PC-9 (cell line): ENCODE measurements at regions of chrX and their contacts with region 1.

Region 1: GRCh38 chrX:74382613-74383012 is 38.7 kb upstream of the SLC16A2 start:
- DNase-seq: peak; percentile 40 to 58
- H3K4me3 ChIP-seq: no peak overlapping the region
- H3K27ac ChIP-seq: no peak overlapping the region
- H3K4me1 ChIP-seq: no peaks in the 10 kb centered on the region
- H3K27me3 ChIP-seq: no peaks in the 10 kb centered on the region
- CTCF ChIP-seq: peak; percentile 82

Region 2: GRCh38 chrX:73855546-73855945 is 527.1 kb before region 1 on chrX:
- CTCF ChIA-PET with region 1: no interaction called
- POLR2A ChIA-PET with region 1: no interaction called
- intact Hi-C with region 1: loop called (anchors 2 kb)
- DNase-seq: peak; percentile 40 to 58
- H3K4me3 ChIP-seq: no peak overlapping the region
- H3K27ac ChIP-seq: no peak overlapping the region
- H3K4me1 ChIP-seq: 0 out of 2 replicates have a peak, but pooled peaks cover 4% of the 10 kb centered on the region
- H3K27me3 ChIP-seq: no peaks in the 10 kb centered on the region
- CTCF ChIP-seq: peak; percentile 77

Region 3: GRCh38 chrX:74550295-74550802 is 167.7 kb after region 1 on chrX:
- CTCF ChIA-PET with region 1: interaction called, 3 read pairs
- POLR2A ChIA-PET with region 1: no interaction called
- intact Hi-C with region 1: loop called (anchors 1 kb)
- DNase-seq: peak; percentile 38 to 55
- H3K4me3 ChIP-seq: no peak overlapping the region
- H3K27ac ChIP-seq: no peak overlapping the region
- H3K4me1 ChIP-seq: no peaks in the 10 kb centered on the region
- H3K27me3 ChIP-seq: no peaks in the 10 kb centered on the region
- CTCF ChIP-seq: peak; percentile 92

Region 4: GRCh38 chrX:75038925-75039324 is 656.3 kb after region 1 on chrX:
- CTCF ChIA-PET with region 1: no interaction called
- POLR2A ChIA-PET with region 1: no interaction called
- intact Hi-C with region 1: no loop called
- DNase-seq: peak in 1 of 2 experiments; percentile 4
- H3K4me3 ChIP-seq: no peak overlapping the region
- H3K27ac ChIP-seq: no peak overlapping the region
- H3K4me1 ChIP-seq: no peaks in the 10 kb centered on the region
- H3K27me3 ChIP-seq: no peaks in the 10 kb centered on the region
- CTCF ChIP-seq: peak; percentile 50

Region 5: DNA sequence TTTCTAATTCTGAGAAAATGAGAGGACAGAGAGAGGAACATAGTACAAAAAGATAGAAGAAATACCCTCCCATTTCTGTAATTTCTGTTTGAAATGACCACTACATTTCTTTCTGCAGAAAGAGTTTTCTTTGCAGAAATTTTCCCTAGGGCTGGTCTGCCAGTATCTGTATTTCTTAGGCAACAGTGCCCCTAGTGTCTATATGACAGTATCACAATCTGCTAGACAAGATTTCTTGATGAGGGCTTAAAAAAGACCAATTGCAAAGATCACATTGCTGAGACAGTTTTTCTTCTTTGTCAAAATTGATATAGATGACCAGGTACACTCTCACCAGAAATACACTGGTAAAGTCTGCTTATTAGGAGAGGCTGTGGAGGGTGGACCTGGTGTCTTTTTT is 1221.2 kb after region 1 on chrX:
- CTCF ChIA-PET with region 1: no interaction called
- POLR2A ChIA-PET with region 1: no interaction called
- intact Hi-C with region 1: loop called (anchors 5 kb)
- DNase-seq: no peak
- H3K4me3 ChIP-seq: no peak overlapping the region
- H3K27ac ChIP-seq: no peak overlapping the region
- H3K4me1 ChIP-seq: no peaks in the 10 kb centered on the region
- H3K27me3 ChIP-seq: no peaks in the 10 kb centered on the region
- CTCF ChIP-seq: peak; percentile 71